H1 (cell line): ENCODE measurements at regions of chr2 and their contacts with region 1.

Region 1: DNA sequence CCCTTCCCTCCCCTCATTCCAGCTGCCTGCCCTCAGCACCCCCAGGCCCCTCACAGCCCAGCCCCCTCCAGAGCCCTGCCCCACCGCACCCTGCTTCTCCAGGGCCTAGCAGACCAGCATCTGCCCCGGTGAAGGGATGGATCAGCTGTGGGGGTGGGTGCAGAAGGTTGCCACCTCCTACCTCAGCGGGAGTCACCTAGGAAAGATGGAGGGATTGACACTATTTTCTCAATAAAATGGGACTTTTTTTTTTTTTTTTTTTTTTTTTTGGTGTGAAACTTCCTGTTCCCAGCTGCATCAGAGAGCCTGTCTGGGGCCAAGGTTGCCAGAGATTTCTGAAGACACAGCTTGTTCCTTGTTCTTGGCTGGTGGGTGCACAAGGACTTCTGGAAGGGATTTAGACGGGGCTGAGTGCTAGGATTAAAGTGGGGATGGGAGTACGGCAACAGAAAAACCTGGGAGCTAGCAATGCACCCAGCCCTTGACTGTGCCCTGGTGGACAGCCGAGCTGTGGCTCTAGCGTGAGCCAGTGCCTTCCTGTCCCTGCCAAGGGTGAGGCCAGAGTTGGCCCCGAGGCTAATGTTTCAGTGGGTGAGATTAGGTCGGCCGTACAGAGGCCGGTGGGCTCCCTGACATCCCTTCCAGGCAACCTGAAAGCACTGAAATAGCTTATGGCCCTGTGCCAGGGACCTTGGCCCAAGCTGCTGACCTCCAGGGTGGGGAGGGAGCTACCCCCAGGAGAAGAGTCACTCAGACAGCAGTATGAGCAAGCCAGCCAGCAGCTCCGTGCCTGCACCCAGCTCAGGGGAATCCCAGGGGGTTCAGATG is 4.6 kb downstream of the B3GNT7 start:
- DNase-seq: peak in 1 of 2 experiments; percentile 54
- H3K4me3 ChIP-seq: no peak overlapping the region
- H3K27ac ChIP-seq: no peak overlapping the region
- H3K4me1 ChIP-seq: peaks cover 0 to 15% (median 12%) of the 10 kb centered on the region in 4 experiments; a peak in 6 of 7 replicates
- H3K27me3 ChIP-seq: no peaks in the 10 kb centered on the region
- CTCF ChIP-seq: no peak
- EP300 ChIP-seq: no peak
- POLR2A ChIP-seq: no peak
- RAD21 ChIP-seq: no peak

Region 2: DNA sequence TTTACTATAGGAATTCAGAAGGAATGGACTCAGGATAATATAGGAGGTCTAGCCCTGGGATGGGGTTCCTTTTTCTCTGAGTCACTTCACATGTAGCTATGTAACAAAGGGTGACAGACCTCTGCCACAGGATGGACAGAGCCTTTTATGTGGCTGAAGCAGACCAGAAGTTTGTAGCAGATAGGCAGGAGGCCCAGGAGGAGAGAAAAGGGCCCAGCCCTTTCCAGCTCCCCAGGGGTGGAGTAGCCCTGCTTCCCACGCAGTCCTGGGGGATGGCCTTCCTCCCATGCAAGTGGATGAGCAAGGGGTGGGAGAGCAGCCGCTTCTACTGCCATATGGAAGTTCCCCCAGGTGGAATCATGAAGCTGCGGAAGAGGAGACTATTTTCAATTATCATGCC is 161.4 kb before region 1 on chr2:
- CTCF ChIA-PET with region 1: interaction called, 218 read pairs
- POLR2A ChIA-PET with region 1: no interaction called
- DNase-seq: no peak
- H3K4me3 ChIP-seq: no peak overlapping the region
- H3K27ac ChIP-seq: no peak overlapping the region
- H3K4me1 ChIP-seq: no peaks in the 10 kb centered on the region
- H3K27me3 ChIP-seq: no peaks in the 10 kb centered on the region
- CTCF ChIP-seq: no peak
- EP300 ChIP-seq: no peak
- POLR2A ChIP-seq: no peak
- RAD21 ChIP-seq: no peak

Region 3: DNA sequence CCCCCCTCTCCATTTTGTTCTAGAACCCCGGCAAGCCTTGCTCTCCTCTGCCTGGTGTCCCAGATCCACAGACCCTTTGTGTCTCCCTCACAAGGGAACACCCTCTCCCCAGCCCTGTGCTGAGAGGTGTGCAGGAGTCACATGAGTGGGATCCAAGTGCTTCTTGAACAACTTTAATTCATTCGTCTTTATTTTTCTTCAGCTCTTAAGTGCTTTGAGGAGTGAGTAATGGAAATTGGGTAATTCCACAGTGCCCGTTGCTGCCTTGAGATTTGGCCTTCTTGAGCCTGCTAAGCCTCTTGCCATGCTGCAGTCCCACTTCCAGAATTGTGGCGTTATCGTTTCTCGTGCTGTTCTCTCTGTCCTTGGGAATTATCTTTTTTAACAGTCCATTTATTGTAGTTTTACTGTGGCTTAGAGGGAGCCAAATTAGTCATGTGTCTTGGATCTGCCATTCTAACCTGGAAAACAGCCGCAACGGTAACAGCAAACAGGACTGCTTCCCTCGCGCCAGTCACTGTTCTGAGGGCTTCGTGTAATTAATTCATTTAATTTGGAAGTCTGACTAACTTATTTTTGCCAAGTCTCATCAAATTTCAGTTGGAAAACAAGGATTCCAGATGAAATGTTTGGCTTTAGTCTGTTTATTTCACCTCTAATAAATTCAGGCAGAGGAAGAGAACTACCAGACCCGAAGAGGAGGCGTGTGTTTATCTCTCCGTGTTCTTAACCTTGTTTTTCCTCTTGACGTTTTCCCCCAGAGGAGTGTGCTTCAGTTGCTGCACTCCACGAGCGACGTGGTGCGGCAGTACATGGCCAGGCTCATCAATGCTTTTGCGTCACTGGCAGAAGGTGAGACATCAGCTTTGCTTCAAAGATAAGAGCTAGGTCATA is 129.6 kb before region 1 on chr2:
- CTCF ChIA-PET with region 1: interaction called, 10 read pairs
- POLR2A ChIA-PET with region 1: no interaction called
- DNase-seq: no peak
- H3K4me3 ChIP-seq: no peak overlapping the region
- H3K27ac ChIP-seq: no peak overlapping the region
- H3K4me1 ChIP-seq: no peaks in the 10 kb centered on the region
- H3K27me3 ChIP-seq: no peaks in the 10 kb centered on the region
- CTCF ChIP-seq: no peak
- EP300 ChIP-seq: no peak
- POLR2A ChIP-seq: no peak
- RAD21 ChIP-seq: no peak

Region 4: GRCh38 chr2:231308631-231309428 is 91.2 kb before region 1 on chr2:
- CTCF ChIA-PET with region 1: interaction called, 11 read pairs
- POLR2A ChIA-PET with region 1: no interaction called
- DNase-seq: no peak
- H3K4me3 ChIP-seq: no peak overlapping the region
- H3K27ac ChIP-seq: no peak overlapping the region
- H3K4me1 ChIP-seq: no peaks in the 10 kb centered on the region; a peak in 1 of 7 replicates
- H3K27me3 ChIP-seq: no peaks in the 10 kb centered on the region
- CTCF ChIP-seq: no peak
- EP300 ChIP-seq: no peak
- POLR2A ChIP-seq: no peak
- RAD21 ChIP-seq: no peak

Region 5: GRCh38 chr2:231321556-231322334 is 78.3 kb before region 1 on chr2:
- CTCF ChIA-PET with region 1: interaction called, 10 read pairs
- POLR2A ChIA-PET with region 1: no interaction called
- DNase-seq: peak in 1 of 2 experiments; percentile 29
- H3K4me3 ChIP-seq: no peak overlapping the region
- H3K27ac ChIP-seq: no peak overlapping the region
- H3K4me1 ChIP-seq: peaks cover 0 to 8% (median 1%) of the 10 kb centered on the region in 4 experiments; a peak in 2 of 7 replicates
- H3K27me3 ChIP-seq: no peaks in the 10 kb centered on the region
- CTCF ChIP-seq: no peak
- EP300 ChIP-seq: no peak
- POLR2A ChIP-seq: no peak
- RAD21 ChIP-seq: no peak

Region 6: DNA sequence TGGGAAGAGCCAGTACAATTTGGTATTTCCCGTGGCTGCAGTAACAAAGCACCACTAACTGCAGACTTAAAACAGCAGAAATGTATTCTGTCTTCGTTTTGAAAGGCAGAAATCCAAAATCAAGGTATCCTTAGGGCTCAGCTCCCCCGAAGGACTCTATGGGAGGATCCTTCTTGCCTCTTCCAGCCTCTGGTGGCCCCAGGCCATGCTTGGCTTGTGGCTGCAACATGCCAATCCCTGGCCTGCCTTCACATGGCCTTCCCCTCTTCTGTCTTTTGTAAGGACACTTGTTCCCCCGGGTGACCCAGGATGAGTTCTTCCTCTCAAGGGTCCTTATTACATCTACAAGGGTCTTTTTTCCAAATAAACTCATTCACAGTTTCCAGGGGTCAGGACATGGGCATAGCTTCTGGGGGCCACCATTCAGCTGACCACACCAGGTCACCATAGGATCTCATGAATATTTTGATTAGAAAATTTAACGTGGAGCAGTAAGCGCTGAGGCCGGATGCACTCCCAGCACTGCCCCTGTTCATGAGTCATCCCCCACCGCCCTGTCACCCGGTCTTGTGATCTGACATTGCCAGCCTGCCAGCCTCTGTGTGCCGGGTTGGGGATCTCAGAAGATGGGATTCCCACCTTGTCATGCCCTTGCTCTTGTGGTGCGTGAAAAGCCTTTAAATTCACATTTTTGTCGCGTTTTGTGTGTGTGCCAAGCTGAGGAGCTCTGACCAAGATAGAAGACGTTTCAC is 65.7 kb before region 1 on chr2:
- CTCF ChIA-PET with region 1: interaction called, 11 read pairs
- POLR2A ChIA-PET with region 1: no interaction called
- DNase-seq: no peak
- H3K4me3 ChIP-seq: no peak overlapping the region
- H3K27ac ChIP-seq: no peak overlapping the region
- H3K4me1 ChIP-seq: peaks cover 0 to 3% (median 1%) of the 10 kb centered on the region in 4 experiments; a peak in 2 of 7 replicates
- H3K27me3 ChIP-seq: no peaks in the 10 kb centered on the region
- CTCF ChIP-seq: no peak
- EP300 ChIP-seq: no peak
- POLR2A ChIP-seq: no peak
- RAD21 ChIP-seq: no peak

Region 7: DNA sequence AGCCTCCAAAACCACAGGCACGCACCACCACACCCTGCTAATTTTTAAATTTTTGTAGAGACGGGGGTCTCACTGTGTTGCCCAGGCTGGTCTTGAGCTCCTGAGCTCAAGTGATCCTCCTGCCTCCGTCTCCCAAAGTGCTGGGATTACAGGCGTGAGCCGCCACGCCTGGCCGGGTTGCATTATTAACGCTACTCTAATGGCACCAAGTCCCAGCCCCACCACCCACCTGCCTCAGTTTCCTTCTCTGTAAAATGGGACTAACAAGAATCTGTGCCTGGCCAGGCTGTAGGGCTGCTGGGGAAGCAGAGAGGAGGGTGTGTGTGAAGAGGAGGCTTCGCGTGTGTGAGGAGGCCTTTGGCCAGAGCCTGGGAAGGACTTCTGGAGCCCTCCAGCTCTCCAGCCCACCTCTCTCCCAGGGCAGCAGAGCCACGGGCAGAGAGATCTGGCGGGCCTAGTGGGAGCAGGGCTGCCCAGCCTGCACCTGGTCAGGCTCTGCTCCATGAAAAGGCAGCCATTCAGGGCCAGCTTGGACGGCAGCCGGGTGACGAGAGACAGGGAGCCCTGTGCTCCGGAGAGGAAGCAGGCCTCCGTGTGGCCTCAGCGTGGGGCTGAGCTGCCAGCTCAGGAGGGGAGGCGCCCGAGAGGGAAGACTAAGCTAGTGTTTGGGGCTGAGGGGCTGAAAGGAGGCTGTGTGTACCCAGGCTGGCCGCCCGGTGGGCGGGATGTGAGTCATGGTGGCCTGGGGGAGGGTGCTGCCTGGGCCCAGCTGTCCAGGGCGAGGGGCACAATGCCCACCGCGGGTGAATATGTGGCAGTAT is 12.0 kb before region 1 on chr2:
- CTCF ChIA-PET with region 1: interaction called, 537 read pairs
- POLR2A ChIA-PET with region 1: interaction called, 4 read pairs
- DNase-seq: no peak
- H3K4me3 ChIP-seq: no peak overlapping the region
- H3K27ac ChIP-seq: no peak overlapping the region
- H3K4me1 ChIP-seq: peaks cover 0 to 14% (median 9%) of the 10 kb centered on the region in 4 experiments; a peak in 6 of 7 replicates
- H3K27me3 ChIP-seq: no peaks in the 10 kb centered on the region
- CTCF ChIP-seq: no peak
- EP300 ChIP-seq: no peak
- POLR2A ChIP-seq: no peak
- RAD21 ChIP-seq: no peak

Region 8: DNA sequence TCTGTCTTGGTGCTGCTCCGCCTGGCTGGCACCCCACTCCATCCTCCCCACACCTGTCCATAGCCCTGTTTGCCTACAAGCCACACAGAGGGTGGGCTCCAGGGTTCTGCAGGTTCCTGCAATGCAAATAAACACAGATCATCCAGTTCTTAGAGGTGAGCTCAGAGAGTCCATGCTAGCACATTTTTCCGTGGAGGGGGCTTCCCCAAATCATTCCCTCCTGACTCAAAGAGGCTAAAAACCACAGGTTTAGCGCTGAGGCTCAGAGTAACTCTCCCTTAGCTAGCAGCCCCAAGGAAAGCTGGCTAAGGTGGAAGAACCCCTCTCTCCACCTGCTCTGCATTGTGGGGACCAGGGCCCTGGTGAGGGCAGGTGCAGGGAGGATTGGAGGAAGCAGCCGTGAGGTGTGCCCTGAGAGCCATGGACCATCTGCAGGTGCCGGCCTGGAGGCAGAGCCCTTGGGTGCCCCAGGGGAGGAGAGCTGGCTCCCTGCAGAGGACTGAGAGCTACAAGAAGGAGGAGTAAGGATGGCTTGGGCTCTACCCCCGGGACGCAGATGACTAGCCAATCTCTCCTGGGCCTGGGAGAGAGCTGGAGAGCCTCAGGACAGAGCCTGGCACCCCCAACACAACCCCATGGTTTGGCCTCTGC is 168.8 kb after region 1 on chr2:
- CTCF ChIA-PET with region 1: no interaction called
- POLR2A ChIA-PET with region 1: no interaction called
- DNase-seq: no peak
- H3K4me3 ChIP-seq: no peak overlapping the region
- H3K27ac ChIP-seq: no peak overlapping the region
- H3K4me1 ChIP-seq: peaks cover 0 to 26% (median 17%) of the 10 kb centered on the region in 4 experiments; a peak in 6 of 7 replicates
- H3K27me3 ChIP-seq: no peaks in the 10 kb centered on the region
- CTCF ChIP-seq: no peak
- EP300 ChIP-seq: no peak
- POLR2A ChIP-seq: no peak
- RAD21 ChIP-seq: no peak

Region 9: GRCh38 chr2:231579554-231579953 is 179.5 kb after region 1 on chr2:
- CTCF ChIA-PET with region 1: no interaction called
- POLR2A ChIA-PET with region 1: no interaction called
- DNase-seq: no peak
- H3K4me3 ChIP-seq: no peak overlapping the region
- H3K27ac ChIP-seq: no peak overlapping the region
- H3K4me1 ChIP-seq: peaks cover 0 to 29% (median 15%) of the 10 kb centered on the region in 4 experiments; a peak in 6 of 7 replicates
- H3K27me3 ChIP-seq: no peaks in the 10 kb centered on the region
- CTCF ChIP-seq: no peak
- EP300 ChIP-seq: no peak
- POLR2A ChIP-seq: no peak
- RAD21 ChIP-seq: no peak